HepG2 (cell line): ENCODE measurements at regions of chr19 and their contacts with region 1.

Region 1: GRCh38 chr19:15672580-15673175 is at the start of gene CYP4F12:
- DNase-seq: peak; percentile 76
- ATAC-seq: peak; percentile 86
- H3K4me3 ChIP-seq: peak within 1 kb of the TSS; percentile 52 to 70 (median 69)
- H3K27ac ChIP-seq: peak within 1 kb of the TSS; percentile 92
- H3K4me1 ChIP-seq: peaks cover 42% of the 10 kb centered on the region
- H3K27me3 ChIP-seq: no peaks in the 10 kb centered on the region
- CTCF ChIP-seq: no peak
- EP300 ChIP-seq: no peak
- POLR2A ChIP-seq: peak; percentile 56 to 77; a peak in 3 of 4 replicates
- RAD21 ChIP-seq: no peak
- total RNA-seq, gene CYP4F12: 7.2 and 30.8 TPM in 2 replicates

Region 2: GRCh38 chr19:15640294-15640903 is 32.3 kb before region 1 on chr19 and contains the start of gene CYP4F3:
- CTCF ChIA-PET with region 1: no interaction called
- POLR2A ChIA-PET with region 1: interaction called, 68 read pairs
- in situ Hi-C with region 1: no loop called
- intact Hi-C with region 1: loop called (anchors 2 kb)
- DNase-seq: peak; percentile 81
- ATAC-seq: peak; percentile 81
- H3K4me3 ChIP-seq: peak within 1 kb of the TSS; percentile 57 to 80 (median 61)
- H3K27ac ChIP-seq: peak within 1 kb of the TSS; percentile 90
- H3K4me1 ChIP-seq: peaks cover 76% of the 10 kb centered on the region
- H3K27me3 ChIP-seq: no peaks in the 10 kb centered on the region
- CTCF ChIP-seq: no peak
- EP300 ChIP-seq: peak in 1 of 2 experiments; percentile 46; a peak in 2 of 4 replicates
- POLR2A ChIP-seq: no peak
- RAD21 ChIP-seq: no peak
- total RNA-seq, gene CYP4F3: 5.6 and 17.8 TPM in 2 replicates

Region 3: GRCh38 chr19:15649526-15649925 is 23.2 kb before region 1 on chr19:
- CTCF ChIA-PET with region 1: no interaction called
- POLR2A ChIA-PET with region 1: interaction called, 11 read pairs
- in situ Hi-C with region 1: no loop called
- intact Hi-C with region 1: no loop called
- DNase-seq: no peak
- ATAC-seq: no peak
- H3K4me3 ChIP-seq: no peak overlapping the region
- H3K27ac ChIP-seq: no peak overlapping the region
- H3K4me1 ChIP-seq: peaks cover 24% of the 10 kb centered on the region
- H3K27me3 ChIP-seq: no peaks in the 10 kb centered on the region
- CTCF ChIP-seq: no peak
- EP300 ChIP-seq: no peak
- POLR2A ChIP-seq: no peak
- RAD21 ChIP-seq: no peak

Region 4: DNA sequence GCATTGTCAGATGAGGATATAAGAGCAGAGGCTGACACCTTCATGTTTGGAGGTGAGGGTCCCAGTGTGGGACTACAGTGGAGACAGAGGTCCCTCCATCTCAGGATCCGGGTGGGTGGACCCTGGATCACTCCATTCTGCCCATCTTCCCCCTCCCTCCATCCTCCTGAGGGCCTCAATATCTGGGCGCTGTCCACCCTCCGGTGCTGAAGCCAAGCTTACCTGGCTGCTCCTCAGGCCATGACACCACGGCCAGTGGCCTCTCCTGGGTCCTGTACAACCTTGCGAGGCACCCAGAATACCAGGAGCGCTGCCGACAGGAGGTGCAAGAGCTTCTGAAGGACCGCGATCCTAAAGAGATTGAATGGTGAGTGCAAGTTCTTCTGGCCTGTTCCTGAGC is 12.2 kb after region 1 on chr19:
- CTCF ChIA-PET with region 1: no interaction called
- POLR2A ChIA-PET with region 1: interaction called, 12 read pairs
- in situ Hi-C with region 1: no loop called
- intact Hi-C with region 1: loop called (anchors 1 kb)
- DNase-seq: no peak
- ATAC-seq: no peak
- H3K4me3 ChIP-seq: no peak overlapping the region
- H3K27ac ChIP-seq: no peak overlapping the region
- H3K4me1 ChIP-seq: peaks cover 25% of the 10 kb centered on the region
- H3K27me3 ChIP-seq: no peaks in the 10 kb centered on the region
- CTCF ChIP-seq: no peak
- EP300 ChIP-seq: no peak
- POLR2A ChIP-seq: no peak
- RAD21 ChIP-seq: no peak

Region 5: DNA sequence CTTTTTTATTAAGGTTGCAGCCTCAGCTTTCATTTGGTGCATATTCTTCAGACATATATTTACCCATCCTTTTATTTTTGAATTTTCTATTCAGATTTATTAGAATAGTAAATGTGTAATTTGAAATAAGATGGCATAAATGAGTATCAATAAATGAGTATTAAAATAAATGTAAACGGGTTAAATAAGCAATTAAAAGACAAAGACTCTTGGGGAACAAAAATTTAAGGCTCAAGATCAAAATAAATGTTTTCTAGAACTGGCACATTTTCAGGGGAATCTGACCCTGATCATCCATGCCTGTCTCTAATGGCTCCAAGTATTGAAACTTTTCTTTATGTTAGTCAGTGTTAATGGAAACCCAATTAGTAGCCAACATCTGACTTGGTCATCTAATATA is 68.1 kb after region 1 on chr19:
- CTCF ChIA-PET with region 1: no interaction called
- POLR2A ChIA-PET with region 1: no interaction called
- in situ Hi-C with region 1: no loop called
- intact Hi-C with region 1: no loop called
- DNase-seq: no peak
- ATAC-seq: no peak
- H3K4me3 ChIP-seq: no peak overlapping the region
- H3K27ac ChIP-seq: no peak overlapping the region
- H3K4me1 ChIP-seq: no peaks in the 10 kb centered on the region
- H3K27me3 ChIP-seq: no peaks in the 10 kb centered on the region
- CTCF ChIP-seq: no peak
- EP300 ChIP-seq: no peak
- POLR2A ChIP-seq: no peak
- RAD21 ChIP-seq: no peak

Region 6: GRCh38 chr19:15779756-15780476 is 107.2 kb after region 1 on chr19:
- CTCF ChIA-PET with region 1: no interaction called
- POLR2A ChIA-PET with region 1: interaction called, 3 read pairs
- in situ Hi-C with region 1: loop called (anchors 5 kb)
- intact Hi-C with region 1: no loop called
- DNase-seq: peak; percentile 45
- ATAC-seq: peak; percentile 65
- H3K4me3 ChIP-seq: no peak overlapping the region
- H3K27ac ChIP-seq: no peak overlapping the region
- H3K4me1 ChIP-seq: no peaks in the 10 kb centered on the region
- H3K27me3 ChIP-seq: no peaks in the 10 kb centered on the region; a peak in 1 of 5 replicates
- CTCF ChIP-seq: no peak
- EP300 ChIP-seq: no peak
- POLR2A ChIP-seq: no peak
- RAD21 ChIP-seq: no peak

Region 7: DNA sequence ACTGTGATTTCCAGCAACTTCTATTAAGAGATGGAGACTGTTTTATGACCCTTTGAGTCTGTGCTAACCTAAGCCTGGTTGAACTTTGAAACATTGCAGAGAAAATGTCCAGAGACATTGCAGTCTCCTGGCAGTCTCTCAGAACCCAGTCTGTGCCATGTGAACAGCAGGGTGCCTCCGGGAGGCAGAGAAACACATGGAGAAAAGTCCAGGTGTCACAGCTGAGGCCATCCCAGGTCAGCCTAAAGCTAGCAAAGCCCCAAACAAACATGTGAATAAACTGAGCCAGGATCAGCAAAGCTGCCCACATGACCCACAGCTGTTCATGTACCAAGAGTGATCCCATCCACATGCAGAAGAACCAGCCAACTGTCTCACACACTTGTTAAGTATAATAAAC is 253.8 kb after region 1 on chr19:
- CTCF ChIA-PET with region 1: no interaction called
- POLR2A ChIA-PET with region 1: no interaction called
- in situ Hi-C with region 1: no loop called
- intact Hi-C with region 1: no loop called
- DNase-seq: no peak
- ATAC-seq: peak; percentile 66
- H3K4me3 ChIP-seq: no peak overlapping the region
- H3K27ac ChIP-seq: no peak overlapping the region
- H3K4me1 ChIP-seq: peaks cover 25% of the 10 kb centered on the region
- H3K27me3 ChIP-seq: no peaks in the 10 kb centered on the region
- CTCF ChIP-seq: 0 out of 2 replicates have a peak, but pooled peaks have one; percentile 20
- EP300 ChIP-seq: no peak
- POLR2A ChIP-seq: no peak
- RAD21 ChIP-seq: no peak